ENCODE measurements at regions of chr6 and their contacts with region 1.

Region 1: DNA sequence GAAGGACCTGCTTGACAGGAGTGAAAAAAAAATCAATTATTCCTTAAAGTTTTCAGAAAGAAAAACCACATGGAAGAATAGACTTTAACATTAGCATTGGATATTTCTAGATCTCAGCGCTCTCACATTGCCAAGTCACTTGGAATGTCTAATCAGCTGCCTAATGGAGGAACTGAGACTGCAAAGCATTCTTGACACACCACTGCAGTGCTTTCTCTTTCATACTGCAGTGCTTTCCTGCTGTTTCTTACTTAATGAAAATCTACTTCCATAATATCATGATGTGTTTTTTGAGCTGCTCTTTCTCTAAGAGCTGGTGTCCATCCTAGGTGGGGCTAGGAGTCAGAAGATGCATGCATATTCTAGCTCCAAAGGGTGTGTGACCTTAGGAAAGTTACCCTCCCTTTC is 20.4 kb upstream of the MCM3 start:
- DNase-seq: no peak
- H3K4me3 Mint-ChIP-seq: peak overlapping the region; percentile 27
- H3K27ac Mint-ChIP-seq: peak overlapping the region; percentile 77
- H3K4me1 Mint-ChIP-seq: peaks cover 65% of the 10 kb centered on the region
- H3K27me3 Mint-ChIP-seq: no peaks in the 10 kb centered on the region

Region 2: DNA sequence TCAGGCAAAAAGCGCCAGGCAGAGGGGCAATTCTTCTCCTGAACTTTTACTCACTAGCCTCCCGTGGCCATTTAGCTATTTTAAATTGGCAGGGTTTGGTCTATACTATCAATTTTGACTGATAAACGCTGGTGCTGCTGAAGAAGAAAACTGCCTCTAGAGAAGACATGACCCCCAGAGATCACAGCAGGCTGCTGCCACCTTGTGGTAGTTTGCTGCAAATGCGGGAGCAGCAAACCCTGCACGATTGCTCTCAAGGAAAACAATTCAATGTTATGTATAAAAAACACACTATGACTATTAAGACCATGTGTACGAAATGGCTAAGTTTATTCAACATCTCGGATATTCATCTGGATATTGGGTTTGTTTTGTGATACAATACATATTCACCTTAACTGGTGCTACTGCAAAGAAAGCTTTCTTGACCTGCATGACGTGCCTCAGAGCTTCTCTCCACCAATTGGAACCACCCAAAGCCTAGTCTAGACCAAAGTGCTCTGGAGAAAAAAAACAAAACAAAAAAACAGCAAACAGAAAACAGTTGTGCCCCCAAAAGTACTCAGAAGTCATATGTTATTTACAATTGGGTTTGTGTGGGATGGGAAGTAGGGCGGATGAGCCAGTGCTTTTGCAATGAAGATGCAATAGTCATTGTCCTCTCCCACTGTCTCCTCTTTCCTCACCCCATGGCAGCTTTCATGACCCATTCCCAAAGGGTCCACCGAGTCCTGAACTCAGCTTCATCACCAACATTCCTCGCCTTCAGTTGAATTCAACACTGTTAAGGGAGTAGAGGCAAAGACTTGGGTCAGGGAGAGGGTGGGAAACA is 41.1 kb before region 1 on chr6:
- CTCF ChIA-PET with region 1: no interaction called
- intact Hi-C with region 1: no loop called
- DNase-seq: peak; percentile 84
- H3K4me3 Mint-ChIP-seq: no peak overlapping the region
- H3K27ac Mint-ChIP-seq: peak overlapping the region; percentile 23
- H3K4me1 Mint-ChIP-seq: peaks cover 15% of the 10 kb centered on the region
- H3K27me3 Mint-ChIP-seq: no peaks in the 10 kb centered on the region

Region 3: DNA sequence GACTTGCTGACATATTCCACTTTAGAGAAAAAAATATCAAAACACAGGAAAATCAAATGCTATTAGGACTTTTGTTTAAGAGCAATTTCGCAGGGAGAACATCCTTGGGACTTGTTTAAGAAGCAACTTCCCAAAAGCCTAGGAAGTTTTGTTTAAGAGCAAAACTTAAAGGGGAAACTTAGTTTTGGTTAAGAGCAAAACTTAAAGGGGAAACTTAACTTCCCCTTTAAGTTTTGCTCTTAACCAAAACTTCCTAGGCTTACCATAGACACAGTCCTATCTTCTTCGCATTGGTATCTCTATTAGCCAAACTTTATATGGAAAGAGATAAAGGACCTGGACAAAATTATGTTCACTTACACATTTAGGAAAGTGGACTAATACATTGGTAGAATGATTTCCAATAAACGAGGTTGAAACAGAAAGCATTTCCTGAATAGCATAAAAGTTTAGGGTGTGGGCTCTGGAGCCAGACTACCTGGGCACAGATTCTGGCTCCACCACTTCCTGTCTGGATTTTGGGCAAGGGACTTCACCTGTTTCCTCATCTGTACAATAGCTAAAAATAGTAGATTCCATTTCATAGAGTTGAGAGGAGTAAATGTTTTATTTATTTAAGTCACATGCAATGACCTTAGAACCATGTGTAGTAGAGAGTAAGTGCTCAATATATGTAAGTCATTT is 72.7 kb after region 1 on chr6:
- CTCF ChIA-PET with region 1: no interaction called
- intact Hi-C with region 1: no loop called
- DNase-seq: peak; percentile 41
- H3K4me3 Mint-ChIP-seq: no peak overlapping the region
- H3K27ac Mint-ChIP-seq: no peak overlapping the region
- H3K4me1 Mint-ChIP-seq: peaks cover 59% of the 10 kb centered on the region
- H3K27me3 Mint-ChIP-seq: no peaks in the 10 kb centered on the region

Region 4: DNA sequence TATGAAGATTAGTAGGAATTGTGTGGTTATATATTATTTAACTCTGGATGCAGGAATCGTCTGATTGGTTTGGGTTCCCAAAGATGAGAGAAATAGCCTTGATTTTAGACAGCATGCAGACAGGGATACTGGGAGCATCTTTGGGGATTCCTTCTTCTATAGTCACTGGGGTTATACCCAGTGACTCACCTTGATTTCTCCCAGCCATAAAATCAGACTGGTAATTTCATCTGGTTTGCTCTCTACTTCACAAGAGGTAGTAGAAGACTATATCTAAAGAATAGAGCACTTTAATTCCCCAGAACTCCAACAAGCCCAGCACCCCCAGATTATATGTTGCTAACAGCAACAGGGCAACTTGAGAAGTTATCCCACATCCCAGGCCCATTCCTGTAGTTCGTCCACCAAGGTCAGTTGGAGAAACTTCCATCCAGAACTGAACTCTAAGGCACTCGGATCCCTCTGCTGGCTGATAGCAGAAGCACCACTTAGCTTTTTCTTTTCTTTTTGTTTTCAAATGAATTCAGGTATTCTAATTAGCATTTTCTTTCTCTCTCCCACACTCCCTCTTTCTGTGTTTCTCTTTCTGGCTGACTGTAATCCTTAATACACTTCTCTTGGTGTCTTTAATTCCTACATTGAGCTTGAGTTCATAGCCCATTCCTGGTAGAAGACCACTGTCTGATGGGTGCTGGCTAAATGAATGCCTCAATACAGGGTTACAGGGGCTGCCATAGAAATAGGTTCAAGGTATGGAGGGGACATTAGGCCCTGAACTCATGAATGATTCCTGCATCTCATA is 94.7 kb after region 1 on chr6:
- CTCF ChIA-PET with region 1: interaction called, 10 read pairs
- intact Hi-C with region 1: loop called (anchors 1 kb)
- DNase-seq: peak; percentile 64
- H3K4me3 Mint-ChIP-seq: no peak overlapping the region
- H3K27ac Mint-ChIP-seq: peak overlapping the region; percentile 73
- H3K4me1 Mint-ChIP-seq: peaks cover 72% of the 10 kb centered on the region
- H3K27me3 Mint-ChIP-seq: no peaks in the 10 kb centered on the region

Measured in activated naive CD4-positive, alpha-beta T cell treated with anti-CD3 and anti-CD28 coated beads for 36 hours (primary cell).